ENCODE measurements at regions of chr6 and their contacts with region 1.

Region 1: DNA sequence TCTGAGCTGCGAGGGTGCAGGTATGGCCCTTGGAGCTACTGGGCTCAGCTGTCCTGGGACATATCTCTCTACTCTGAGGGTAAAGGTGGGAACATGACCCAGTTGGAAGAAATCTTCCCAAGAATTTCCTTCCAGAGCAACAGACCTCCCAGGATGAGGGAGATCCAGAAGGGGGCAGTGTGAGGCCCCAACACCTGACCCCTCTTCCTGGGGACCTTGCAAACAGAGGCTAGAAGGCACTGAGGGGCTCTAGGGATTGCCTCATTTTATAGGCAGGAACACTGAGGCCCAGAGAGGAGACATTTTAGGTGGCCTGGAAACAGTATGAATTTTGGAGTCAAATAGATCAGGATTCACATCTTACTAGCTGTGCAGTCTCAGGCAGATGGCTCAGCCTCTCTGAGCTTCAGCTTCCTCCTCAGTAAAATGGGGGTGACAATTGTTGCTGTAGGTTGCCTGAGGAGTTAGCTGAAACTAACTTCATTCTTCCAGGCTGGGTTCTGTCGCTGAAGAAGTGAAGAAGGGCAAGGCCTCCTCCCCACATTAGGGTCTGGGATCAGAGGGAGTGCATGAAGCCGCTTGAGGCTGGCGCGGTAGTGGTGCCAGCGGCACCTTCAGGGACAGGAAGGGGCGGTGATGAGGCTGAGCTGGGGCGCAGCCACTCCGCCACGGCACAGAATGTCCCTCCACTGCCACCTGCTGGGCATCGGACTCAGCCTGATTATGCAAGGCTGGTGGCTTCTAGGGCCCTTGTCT is 11.4 kb downstream of the KCNK17 start:
- DNase-seq: peak; percentile 72 to 81
- H3K4me3 ChIP-seq: no peak overlapping the region
- H3K27ac ChIP-seq: no peak overlapping the region
- H3K4me1 ChIP-seq: peaks cover 0 to 11% (median 2%) of the 10 kb centered on the region in 4 donors
- H3K27me3 ChIP-seq: no peaks in the 10 kb centered on the region
- CTCF ChIP-seq: peak; percentile 84 to 90

Region 2: DNA sequence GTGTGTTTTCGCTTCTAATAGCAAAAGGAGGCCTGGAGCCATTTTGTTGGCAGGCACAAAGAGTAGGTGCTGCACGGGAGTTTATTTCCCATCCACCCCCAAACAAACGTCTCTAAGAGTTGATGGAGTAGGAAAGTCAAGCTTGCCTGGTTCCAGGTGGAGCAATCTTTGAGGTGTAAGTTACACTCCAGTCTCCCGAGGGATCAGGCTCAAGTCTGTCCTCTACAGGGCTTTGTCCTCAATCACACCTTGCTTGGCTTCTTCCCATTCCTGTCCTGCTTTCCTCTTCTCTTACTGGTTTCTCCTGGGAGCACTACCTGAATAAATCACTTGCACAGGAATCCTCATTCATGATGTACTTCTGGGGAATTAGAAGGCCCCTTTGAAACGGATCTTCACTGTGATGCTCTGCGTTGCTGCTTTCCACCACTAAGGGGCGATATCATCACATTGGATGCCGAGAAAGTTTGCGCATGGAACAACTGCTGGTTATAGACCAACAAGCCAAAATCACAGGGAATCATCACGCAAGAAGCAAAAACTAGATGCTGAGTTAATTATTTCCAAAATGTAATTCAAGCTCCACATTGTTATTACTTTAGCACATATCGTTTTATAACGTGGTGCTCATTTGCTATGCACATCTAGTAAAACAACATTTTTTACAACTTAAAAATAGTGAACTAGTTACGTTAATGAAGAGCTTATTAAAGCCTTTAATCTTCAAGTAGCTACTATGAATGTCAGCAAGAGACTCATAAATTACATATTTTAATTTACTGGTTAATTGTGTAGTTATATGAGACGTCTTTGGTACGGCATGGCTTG is 430.9 kb before region 1 on chr6:
- intact Hi-C with region 1: loop called (anchors 10 kb)
- DNase-seq: peak in 1 of 2 donors; percentile 24
- H3K4me3 ChIP-seq: no peak overlapping the region
- H3K27ac ChIP-seq: no peak overlapping the region
- H3K4me1 ChIP-seq: no peaks in the 10 kb centered on the region
- H3K27me3 ChIP-seq: peaks cover 0 to 3% of the 10 kb centered on the region in 2 donors
- CTCF ChIP-seq: peak; percentile 51 to 61

Region 3: DNA sequence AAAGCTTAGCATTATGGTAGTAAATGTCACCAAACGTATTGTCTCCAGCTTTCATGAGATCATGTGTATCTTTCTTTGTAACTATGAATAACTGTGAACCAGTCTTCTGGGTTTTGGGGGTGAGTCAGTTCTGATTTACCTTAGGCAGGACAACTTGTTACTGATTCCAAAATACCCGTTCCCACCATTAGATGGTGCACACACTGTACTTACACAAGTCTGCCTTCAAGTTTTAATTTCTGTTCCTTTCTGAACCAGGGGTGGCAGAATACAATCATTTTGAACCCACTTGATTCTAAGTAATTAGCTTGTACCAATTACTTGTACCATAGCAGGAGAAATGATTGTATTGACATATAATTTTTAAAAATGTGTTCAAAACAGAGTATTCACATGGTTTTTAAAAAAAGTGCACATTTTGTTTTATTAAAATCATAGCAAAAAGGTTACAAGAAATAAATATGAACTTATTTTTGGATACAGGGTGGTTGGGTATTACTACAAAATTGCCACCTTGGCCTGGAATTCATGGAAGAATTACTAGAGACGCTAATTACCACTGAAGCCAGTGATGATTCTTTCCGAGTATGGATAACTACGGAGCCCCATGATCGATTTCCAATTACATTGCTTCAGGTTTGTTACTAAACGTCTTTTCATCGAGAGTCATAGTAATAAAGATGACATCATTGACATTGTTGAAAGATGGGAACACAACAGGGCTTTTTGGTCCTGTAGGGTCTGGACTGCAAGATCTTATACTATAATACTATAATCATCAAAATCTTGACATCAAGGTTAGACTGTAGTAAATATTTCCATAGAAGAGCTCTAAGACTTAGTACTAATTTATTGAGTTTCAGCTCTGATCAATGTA is 329.4 kb before region 1 on chr6:
- intact Hi-C with region 1: loop called (anchors 10 kb)
- DNase-seq: no peak
- H3K4me3 ChIP-seq: no peak overlapping the region
- H3K27ac ChIP-seq: no peak overlapping the region
- H3K4me1 ChIP-seq: no peaks in the 10 kb centered on the region
- H3K27me3 ChIP-seq: peaks cover 0 to 8% of the 10 kb centered on the region in 2 donors
- CTCF ChIP-seq: peak; percentile 34 to 44

Region 4: DNA sequence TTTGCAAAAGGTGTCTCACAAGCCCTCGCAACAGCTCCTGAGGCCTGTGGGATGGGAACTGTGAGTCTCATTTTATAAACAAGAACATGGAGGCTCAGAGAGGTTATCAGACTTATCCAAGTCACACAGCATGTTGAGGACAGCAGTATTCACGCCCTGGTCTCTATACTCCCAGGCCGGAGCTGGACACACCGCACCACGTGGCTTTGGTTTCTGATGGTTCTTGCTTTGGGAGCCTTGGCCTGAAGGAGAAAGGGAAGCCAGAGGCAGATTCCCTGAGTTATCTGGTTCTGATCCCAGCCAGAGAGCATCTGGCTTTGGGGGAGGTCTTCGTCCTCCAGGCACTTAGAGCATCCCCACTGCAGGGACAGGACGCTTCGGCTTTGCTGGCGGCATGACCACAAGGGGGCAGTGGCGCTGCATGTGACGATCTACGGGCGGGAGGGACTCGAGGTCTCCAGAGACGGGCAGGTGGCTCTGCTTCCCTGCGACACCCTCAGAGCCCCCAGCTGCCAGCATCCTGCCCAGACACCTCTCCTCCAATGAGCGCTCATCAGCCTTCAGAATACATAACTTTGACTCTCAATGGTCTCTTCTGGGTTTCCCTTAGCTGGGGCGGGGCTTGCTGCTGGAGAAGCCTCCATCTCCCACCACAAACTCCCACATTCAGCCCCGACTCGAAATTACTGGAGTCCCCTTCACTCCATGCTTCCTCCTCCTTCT is 136.5 kb before region 1 on chr6:
- intact Hi-C with region 1: loop called (anchors 2 kb)
- DNase-seq: peak; percentile 54 to 78
- H3K4me3 ChIP-seq: no peak overlapping the region
- H3K27ac ChIP-seq: no peak overlapping the region
- H3K4me1 ChIP-seq: peaks cover 0 to 11% (median 0%) of the 10 kb centered on the region in 4 donors
- H3K27me3 ChIP-seq: peaks cover 0 to 6% of the 10 kb centered on the region in 2 donors
- CTCF ChIP-seq: peak; percentile 86 to 89